ENCODE measurements at regions of chr6 and their contacts with region 1.

Region 1: GRCh38 chr6:99912657-99913056 is 81.4 kb downstream of the MCHR2 start:
- DNase-seq: no peak
- ATAC-seq: no peak
- H3K4me3 ChIP-seq: no peak overlapping the region
- H3K27ac ChIP-seq: no peak overlapping the region
- H3K4me1 ChIP-seq: no peaks in the 10 kb centered on the region
- H3K27me3 ChIP-seq: no peaks in the 10 kb centered on the region
- CTCF ChIP-seq: no peak
- POLR2A ChIP-seq: no peak

Region 2: GRCh38 chr6:100065348-100065747 is 152.7 kb after region 1 on chr6:
- intact Hi-C with region 1: loop called (anchors 10 kb)
- DNase-seq: no peak
- ATAC-seq: no peak
- H3K4me3 ChIP-seq: no peak overlapping the region
- H3K27ac ChIP-seq: no peak overlapping the region
- H3K4me1 ChIP-seq: no peaks in the 10 kb centered on the region
- H3K27me3 ChIP-seq: no peaks in the 10 kb centered on the region
- CTCF ChIP-seq: no peak
- POLR2A ChIP-seq: no peak

Measured in body of pancreas (tissue), 4 donors.